ENCODE measurements at regions of chr17 and their contacts with region 1.

Region 1: GRCh38 chr17:36921095-36921851 is 16.0 kb upstream of the LHX1 start:
- DNase-seq: no peak
- H3K4me3 Mint-ChIP-seq: no peak overlapping the region
- H3K27ac Mint-ChIP-seq: peak overlapping the region; percentile 71
- H3K4me1 Mint-ChIP-seq: peaks cover 20% of the 10 kb centered on the region
- H3K27me3 Mint-ChIP-seq: peaks cover 4% of the 10 kb centered on the region

Region 2: DNA sequence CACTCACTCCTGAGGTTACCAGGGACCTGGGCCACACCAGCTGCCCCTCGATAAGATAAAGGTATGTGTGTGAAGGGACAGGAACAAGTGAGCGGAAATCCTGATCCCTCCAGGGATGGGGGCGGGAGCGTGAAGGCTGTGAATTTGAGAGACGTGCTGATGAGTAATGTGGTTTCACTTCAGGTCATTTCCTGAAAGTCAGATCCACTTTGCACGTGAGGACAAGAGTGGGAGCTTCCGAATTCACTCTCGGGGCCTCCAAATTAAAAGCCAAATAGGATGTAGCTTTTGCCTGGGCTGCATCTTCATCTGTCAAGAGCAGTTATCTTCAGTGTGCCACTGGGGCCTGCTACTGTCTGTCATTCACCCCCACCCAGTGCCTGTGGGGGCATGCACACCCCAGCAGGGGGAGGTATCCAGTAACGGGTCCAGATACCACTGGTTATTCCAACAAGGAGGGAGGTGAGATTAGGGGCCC is 71.4 kb before region 1 on chr17:
- intact Hi-C with region 1: loop called (anchors 10 kb)
- DNase-seq: peak; percentile 16
- H3K4me3 Mint-ChIP-seq: peak overlapping the region; percentile 51
- H3K27ac Mint-ChIP-seq: peak overlapping the region; percentile 71
- H3K4me1 Mint-ChIP-seq: peaks cover 29% of the 10 kb centered on the region
- H3K27me3 Mint-ChIP-seq: no peaks in the 10 kb centered on the region

Region 3: GRCh38 chr17:36907407-36907806 is 13.9 kb before region 1 on chr17:
- intact Hi-C with region 1: no loop called
- DNase-seq: no peak
- H3K4me3 Mint-ChIP-seq: no peak overlapping the region
- H3K27ac Mint-ChIP-seq: no peak overlapping the region
- H3K4me1 Mint-ChIP-seq: no peaks in the 10 kb centered on the region
- H3K27me3 Mint-ChIP-seq: peaks cover 22% of the 10 kb centered on the region

Measured in activated T-helper 2 cell treated with anti-CD3 and anti-CD28 coated beads, Interferon-gamma antibody, Interleukin-2, Interleukin-4, amounts not matched to agents 10 μg/mL and 5 μg/mL and 100 μg/mL, durations not matched to agents 14 hours and 24 hours and 36 hours (primary cell).